GM12878 (cell line): ENCODE measurements at regions of chr3 and their contacts with region 1.

Region 1: DNA sequence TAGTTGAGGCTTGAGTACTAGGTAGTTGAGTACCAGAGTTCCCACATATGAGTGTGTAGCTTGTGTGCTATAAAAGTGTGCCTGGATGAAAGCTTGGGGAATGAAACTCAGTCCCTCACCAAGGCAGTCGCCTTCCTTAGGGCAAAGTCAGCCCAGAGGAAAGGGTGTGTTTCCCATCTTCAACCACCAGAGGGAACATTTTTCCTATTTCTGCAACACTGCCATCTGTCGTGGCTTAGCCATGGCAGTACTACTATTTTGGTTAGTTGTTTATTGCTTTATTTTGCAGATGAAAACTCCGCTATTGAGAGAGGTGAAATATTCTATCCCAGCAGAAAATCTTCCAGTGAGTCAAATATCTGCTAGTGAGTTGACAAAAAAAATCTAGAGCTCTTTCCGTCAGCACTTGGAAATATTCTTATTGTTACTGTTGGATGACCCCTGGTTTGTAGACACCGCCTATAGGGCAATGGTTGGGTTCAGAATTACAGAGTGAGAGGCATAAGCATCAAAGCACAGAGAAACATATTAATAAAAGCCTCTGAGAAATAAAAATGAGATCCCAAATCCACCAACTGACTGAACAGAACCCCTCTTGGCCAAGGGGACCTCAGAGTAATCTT is 239.9 kb downstream of the CPNE4 start:
- DNase-seq: no peak
- ATAC-seq: peak; percentile 80
- H3K4me3 ChIP-seq: no peak overlapping the region
- H3K27ac ChIP-seq: no peak overlapping the region
- H3K4me1 ChIP-seq: peaks cover 8% of the 10 kb centered on the region
- H3K27me3 ChIP-seq: no peaks in the 10 kb centered on the region
- CTCF ChIP-seq: peak; percentile 82 to 91 (median 83)
- EP300 ChIP-seq: no peak
- POLR2A ChIP-seq: no peak
- RAD21 ChIP-seq: peak; percentile 84

Region 2: GRCh38 chr3:131033480-131034080 is 761.3 kb before region 1 on chr3:
- CTCF ChIA-PET with region 1: interaction called, 8 read pairs
- POLR2A ChIA-PET with region 1: no interaction called
- RAD21 ChIA-PET with region 1: interaction called, 4 read pairs
- SMC1A ChIA-PET with region 1: no interaction called
- in situ Hi-C with region 1: no loop called
- intact Hi-C with region 1: loop called (anchors 5 kb)
- DNase-seq: no peak
- ATAC-seq: peak; percentile 82
- H3K4me3 ChIP-seq: no peak overlapping the region
- H3K27ac ChIP-seq: no peak overlapping the region
- H3K4me1 ChIP-seq: no peaks in the 10 kb centered on the region
- H3K27me3 ChIP-seq: no peaks in the 10 kb centered on the region
- CTCF ChIP-seq: peak; percentile 48 to 67 (median 57); a peak in 5 of 6 replicates
- EP300 ChIP-seq: no peak
- POLR2A ChIP-seq: no peak
- RAD21 ChIP-seq: peak; percentile 71

Region 3: DNA sequence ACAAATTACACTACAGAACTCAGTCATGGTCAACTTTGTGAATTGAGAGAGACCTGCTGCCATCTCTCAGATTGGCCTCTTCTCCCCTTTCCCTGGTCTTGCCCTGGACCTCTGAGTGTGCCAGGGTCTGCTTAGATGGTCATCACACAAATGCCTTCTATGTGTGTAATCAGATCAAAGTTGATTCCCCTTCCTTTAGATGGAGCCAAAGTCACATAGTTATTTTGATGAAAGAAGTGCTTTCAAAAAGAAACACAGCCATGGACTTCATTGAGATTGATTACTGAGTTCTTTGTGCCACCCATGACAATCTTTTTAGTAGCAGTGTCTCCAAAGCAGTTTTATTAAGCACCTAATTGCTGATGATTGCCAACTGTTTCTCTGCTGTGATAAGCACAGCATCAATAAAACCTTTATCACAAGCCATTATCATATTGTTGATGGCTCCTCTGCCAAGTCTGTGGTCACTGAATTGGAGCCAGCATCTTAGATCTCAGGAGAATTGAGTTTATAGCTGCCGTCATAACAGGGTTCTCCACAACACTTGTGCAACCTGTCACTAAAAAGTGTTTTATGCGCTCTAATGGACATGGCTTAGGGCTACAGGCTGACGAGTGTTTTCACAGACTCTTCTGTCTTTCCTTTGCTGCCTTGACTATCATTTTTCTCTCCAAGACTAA is 563.0 kb before region 1 on chr3:
- CTCF ChIA-PET with region 1: no interaction called
- POLR2A ChIA-PET with region 1: no interaction called
- RAD21 ChIA-PET with region 1: no interaction called
- SMC1A ChIA-PET with region 1: no interaction called
- in situ Hi-C with region 1: no loop called
- intact Hi-C with region 1: no loop called
- DNase-seq: no peak
- ATAC-seq: no peak
- H3K4me3 ChIP-seq: no peak overlapping the region
- H3K27ac ChIP-seq: no peak overlapping the region
- H3K4me1 ChIP-seq: no peaks in the 10 kb centered on the region
- H3K27me3 ChIP-seq: no peaks in the 10 kb centered on the region; a peak in 1 of 4 replicates
- CTCF ChIP-seq: 0 out of 6 replicates have a peak, but pooled peaks of 1 of the 3 experiments have one; percentile 6
- EP300 ChIP-seq: no peak
- POLR2A ChIP-seq: no peak
- RAD21 ChIP-seq: 0 out of 2 replicates have a peak, but pooled peaks have one; percentile 21

Region 4: DNA sequence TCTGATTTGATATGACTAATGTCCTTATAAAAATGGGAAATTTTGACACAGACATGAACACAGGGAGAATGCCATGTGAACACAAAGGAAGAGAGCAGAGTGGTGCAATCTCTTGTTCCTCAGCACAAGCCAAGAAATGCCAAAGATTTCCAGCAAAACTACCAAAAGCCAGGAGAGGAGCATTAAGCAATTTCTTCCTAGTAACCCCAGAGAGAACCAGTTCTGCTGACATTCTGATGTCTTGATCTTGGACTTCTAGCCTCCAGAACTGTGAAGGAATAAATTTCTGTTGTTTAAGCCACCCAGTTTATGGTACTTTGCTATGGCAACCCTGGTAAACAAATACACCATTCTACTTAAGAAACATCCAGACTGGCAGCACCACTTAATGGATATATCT is 64.3 kb before region 1 on chr3:
- CTCF ChIA-PET with region 1: interaction called, 22 read pairs
- POLR2A ChIA-PET with region 1: no interaction called
- RAD21 ChIA-PET with region 1: interaction called, 3 read pairs
- SMC1A ChIA-PET with region 1: interaction called, 16 read pairs
- in situ Hi-C with region 1: no loop called
- intact Hi-C with region 1: loop called (anchors 5 kb)
- DNase-seq: no peak
- ATAC-seq: peak; percentile 14; the same call in 2 of the 3 replicates
- H3K4me3 ChIP-seq: no peak overlapping the region
- H3K27ac ChIP-seq: no peak overlapping the region
- H3K4me1 ChIP-seq: peaks cover 26% of the 10 kb centered on the region
- H3K27me3 ChIP-seq: no peaks in the 10 kb centered on the region
- CTCF ChIP-seq: no peak
- EP300 ChIP-seq: no peak
- POLR2A ChIP-seq: no peak
- RAD21 ChIP-seq: no peak

Region 5: GRCh38 chr3:131750256-131750655 is 44.6 kb before region 1 on chr3:
- CTCF ChIA-PET with region 1: no interaction called
- POLR2A ChIA-PET with region 1: no interaction called
- RAD21 ChIA-PET with region 1: no interaction called
- SMC1A ChIA-PET with region 1: no interaction called
- in situ Hi-C with region 1: no loop called
- intact Hi-C with region 1: no loop called
- DNase-seq: no peak
- ATAC-seq: no peak
- H3K4me3 ChIP-seq: no peak overlapping the region
- H3K27ac ChIP-seq: no peak overlapping the region
- H3K4me1 ChIP-seq: no peaks in the 10 kb centered on the region
- H3K27me3 ChIP-seq: no peaks in the 10 kb centered on the region
- CTCF ChIP-seq: no peak
- EP300 ChIP-seq: no peak
- POLR2A ChIP-seq: no peak
- RAD21 ChIP-seq: no peak

Region 6: DNA sequence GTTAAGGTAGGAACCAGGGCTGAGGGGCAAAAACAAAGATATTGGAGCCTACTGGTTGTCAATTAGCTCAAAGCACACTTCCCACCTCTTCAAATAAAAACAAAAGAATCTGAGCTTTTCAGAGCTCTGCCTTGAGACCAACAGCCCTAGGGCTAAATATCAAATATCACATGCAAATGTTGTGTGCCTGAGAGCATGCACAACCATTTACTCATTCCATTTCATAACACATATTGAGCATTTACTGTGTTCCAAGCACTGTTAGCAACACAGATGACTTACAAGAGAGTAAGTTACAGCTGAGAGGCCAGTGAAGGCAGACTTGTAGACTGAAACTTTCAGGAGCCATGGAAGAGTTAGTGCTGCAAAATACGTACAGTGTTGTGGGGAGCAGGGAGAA is 17.5 kb after region 1 on chr3:
- CTCF ChIA-PET with region 1: interaction called, 32 read pairs
- POLR2A ChIA-PET with region 1: no interaction called
- RAD21 ChIA-PET with region 1: interaction called, 20 read pairs
- SMC1A ChIA-PET with region 1: interaction called, 41 read pairs
- in situ Hi-C with region 1: no loop called
- intact Hi-C with region 1: no loop called
- DNase-seq: no peak
- ATAC-seq: no peak
- H3K4me3 ChIP-seq: no peak overlapping the region
- H3K27ac ChIP-seq: no peak overlapping the region
- H3K4me1 ChIP-seq: no peaks in the 10 kb centered on the region
- H3K27me3 ChIP-seq: no peaks in the 10 kb centered on the region
- CTCF ChIP-seq: no peak
- EP300 ChIP-seq: no peak
- POLR2A ChIP-seq: no peak
- RAD21 ChIP-seq: no peak

Region 7: GRCh38 chr3:132006605-132007204 is 211.8 kb after region 1 on chr3:
- CTCF ChIA-PET with region 1: interaction called, 18 read pairs
- POLR2A ChIA-PET with region 1: no interaction called
- RAD21 ChIA-PET with region 1: interaction called, 6 read pairs
- SMC1A ChIA-PET with region 1: interaction called, 5 read pairs
- in situ Hi-C with region 1: no loop called
- intact Hi-C with region 1: no loop called
- DNase-seq: no peak
- ATAC-seq: peak; percentile 76
- H3K4me3 ChIP-seq: no peak overlapping the region
- H3K27ac ChIP-seq: no peak overlapping the region
- H3K4me1 ChIP-seq: no peaks in the 10 kb centered on the region
- H3K27me3 ChIP-seq: no peaks in the 10 kb centered on the region; a peak in 1 of 4 replicates
- CTCF ChIP-seq: peak; percentile 50 to 59 (median 56)
- EP300 ChIP-seq: no peak
- POLR2A ChIP-seq: no peak
- RAD21 ChIP-seq: no peak

Region 8: DNA sequence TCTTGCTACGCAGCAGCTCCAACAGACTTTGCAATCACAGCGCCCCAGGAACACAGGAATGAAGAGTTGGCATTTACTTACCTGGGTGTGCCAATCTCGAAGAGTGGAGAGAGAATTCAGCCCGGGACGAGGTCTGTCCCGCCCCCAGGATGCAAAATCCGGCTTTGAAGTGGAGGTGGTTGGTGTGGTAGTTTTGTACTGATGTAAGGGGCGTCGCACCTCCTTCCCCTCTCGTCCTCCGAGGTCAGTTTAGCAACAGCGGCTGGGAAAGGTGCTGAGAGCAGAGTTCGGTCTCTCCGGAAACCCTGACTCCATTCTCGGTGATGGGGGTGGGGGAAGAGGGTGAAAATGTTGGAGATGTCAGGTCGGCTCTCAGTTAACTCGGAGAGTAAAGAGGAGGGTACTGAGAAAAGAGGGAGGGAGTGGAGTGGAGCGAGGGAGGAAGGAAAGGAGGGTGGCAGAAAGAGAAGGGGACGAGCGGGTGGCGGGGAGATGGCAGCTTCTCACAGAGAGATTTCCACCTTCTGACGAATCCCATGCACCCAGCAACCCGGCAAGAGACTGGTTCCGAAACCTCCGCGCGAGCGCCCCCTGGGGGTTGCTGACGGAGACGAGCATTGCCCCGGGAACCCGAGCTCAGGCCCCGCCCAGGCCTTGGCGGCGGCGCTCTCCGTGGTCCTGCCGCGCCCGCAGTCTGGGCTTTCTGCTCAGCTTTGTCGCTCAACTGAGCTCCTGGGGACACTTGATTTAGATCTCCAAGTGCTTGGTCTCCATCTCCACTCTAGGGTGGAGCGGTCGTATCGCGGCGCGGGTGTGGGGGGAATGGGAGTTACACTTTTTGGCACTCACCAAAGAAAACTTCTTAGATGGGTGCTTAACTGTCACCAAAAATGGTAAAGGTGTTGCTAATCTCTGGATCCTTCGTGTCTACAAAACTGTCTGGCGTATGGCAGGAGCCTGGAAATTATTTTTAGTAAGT is 239.9 kb after region 1 on chr3 and contains the start of gene CPNE4:
- CTCF ChIA-PET with region 1: interaction called, 118 read pairs
- POLR2A ChIA-PET with region 1: no interaction called
- RAD21 ChIA-PET with region 1: interaction called, 47 read pairs
- SMC1A ChIA-PET with region 1: interaction called, 75 read pairs
- in situ Hi-C with region 1: loop called (anchors 5 kb)
- intact Hi-C with region 1: loop called (anchors 1 kb)
- DNase-seq: no peak
- ATAC-seq: peak; percentile 98
- H3K4me3 ChIP-seq: no peak within 1 kb of the TSS
- H3K27ac ChIP-seq: no peak within 1 kb of the TSS
- H3K4me1 ChIP-seq: no peaks in the 10 kb centered on the region
- H3K27me3 ChIP-seq: peaks cover 3 to 11% of the 10 kb centered on the region in 2 experiments
- CTCF ChIP-seq: peak; percentile 72 to 73 (median 72)
- EP300 ChIP-seq: no peak
- POLR2A ChIP-seq: no peak
- RAD21 ChIP-seq: peak; percentile 32; the same call in 1 of the 2 replicates
- polyA plus RNA-seq, gene CPNE4: 0.19 to 0.75 TPM